ENCODE measurements at regions of chr10 and their contacts with region 1.

Region 1: GRCh38 chr10:79195091-79195923 is 126.5 kb downstream of the ZMIZ1 start:
- DNase-seq: peak; percentile 88
- CTCF ChIP-seq: peak; percentile 96

Region 2: DNA sequence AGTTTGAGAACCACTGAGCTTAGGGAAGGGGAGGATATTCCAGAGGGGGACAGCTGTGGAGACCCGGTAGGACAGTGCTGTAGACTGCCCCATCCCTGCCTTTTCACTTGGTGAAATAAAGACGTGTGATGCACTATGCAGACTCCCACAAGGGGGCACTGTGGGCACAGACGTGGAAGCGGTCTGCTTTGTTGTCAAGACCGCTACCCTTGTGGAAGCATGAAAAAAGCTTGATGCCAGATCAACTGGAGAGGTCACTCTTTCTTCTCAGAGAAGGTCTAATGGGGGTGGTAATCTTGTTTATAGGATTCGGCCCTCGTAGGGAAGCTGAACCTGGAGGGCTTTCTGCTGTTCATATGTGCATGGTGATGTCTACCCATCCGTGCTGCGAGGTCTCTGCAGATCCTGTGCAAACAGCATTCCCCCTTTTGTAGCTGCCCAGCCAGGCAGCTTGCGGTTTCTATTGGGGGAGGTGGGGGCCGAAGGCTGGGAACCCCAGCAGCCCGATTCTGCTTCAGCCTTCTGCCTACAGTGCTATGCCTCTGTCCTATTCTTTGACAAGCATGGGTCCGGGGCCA is 1147.9 kb before region 1 on chr10:
- CTCF ChIA-PET with region 1: interaction called, 102 read pairs
- POLR2A ChIA-PET with region 1: no interaction called
- DNase-seq: peak; percentile 65
- CTCF ChIP-seq: peak; percentile 90

Region 3: GRCh38 chr10:78830062-78830975 is 365.0 kb before region 1 on chr10:
- CTCF ChIA-PET with region 1: no interaction called
- POLR2A ChIA-PET with region 1: no interaction called
- DNase-seq: no peak
- CTCF ChIP-seq: no peak

Region 4: DNA sequence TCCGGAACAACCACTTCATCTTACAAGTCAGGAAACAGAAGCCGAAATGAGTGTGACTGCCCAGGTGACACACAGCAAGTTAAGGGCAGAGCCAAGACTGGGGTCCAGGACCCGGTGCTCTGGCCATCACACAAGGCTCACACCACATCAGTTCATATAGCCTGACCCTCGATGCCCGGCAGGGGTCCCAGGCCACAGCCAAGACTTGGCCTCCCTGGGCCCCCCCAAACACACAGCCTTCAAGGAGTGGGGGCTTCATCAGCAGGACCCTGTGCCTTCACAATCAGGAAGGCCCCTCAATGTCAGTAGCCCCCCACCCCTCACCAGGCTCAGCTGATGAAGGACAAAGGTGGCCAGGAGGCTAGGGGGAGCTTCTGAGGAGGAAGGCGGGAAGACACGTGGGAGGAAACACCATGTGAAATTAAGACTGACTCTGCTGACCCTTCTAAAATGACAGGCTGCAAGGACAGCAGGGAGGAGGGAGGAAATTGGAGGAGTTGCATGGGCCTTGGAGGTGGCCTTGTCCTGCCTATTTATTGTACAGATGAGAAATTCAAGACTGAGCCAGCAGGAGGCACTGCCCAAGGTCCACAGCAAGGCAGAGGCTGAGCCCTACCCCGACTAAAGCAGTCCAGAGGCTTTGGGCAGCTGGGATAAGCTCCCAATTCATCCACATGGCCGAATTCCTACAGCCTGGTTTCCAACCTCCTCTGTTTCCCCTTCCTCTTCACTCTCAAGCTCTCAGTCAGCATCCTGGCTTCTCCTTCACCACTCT is 342.7 kb before region 1 on chr10:
- CTCF ChIA-PET with region 1: interaction called, 15 read pairs
- POLR2A ChIA-PET with region 1: no interaction called
- DNase-seq: no peak
- CTCF ChIP-seq: peak; percentile 13

Region 5: GRCh38 chr10:79067241-79068202 is 127.8 kb before region 1 on chr10:
- CTCF ChIA-PET with region 1: interaction called, 27 read pairs
- POLR2A ChIA-PET with region 1: no interaction called
- DNase-seq: peak; percentile 86
- CTCF ChIP-seq: no peak

Region 6: GRCh38 chr10:79166312-79166721 is 29.0 kb before region 1 on chr10:
- CTCF ChIA-PET with region 1: interaction called, 23 read pairs
- POLR2A ChIA-PET with region 1: no interaction called
- DNase-seq: no peak
- CTCF ChIP-seq: no peak

Region 7: DNA sequence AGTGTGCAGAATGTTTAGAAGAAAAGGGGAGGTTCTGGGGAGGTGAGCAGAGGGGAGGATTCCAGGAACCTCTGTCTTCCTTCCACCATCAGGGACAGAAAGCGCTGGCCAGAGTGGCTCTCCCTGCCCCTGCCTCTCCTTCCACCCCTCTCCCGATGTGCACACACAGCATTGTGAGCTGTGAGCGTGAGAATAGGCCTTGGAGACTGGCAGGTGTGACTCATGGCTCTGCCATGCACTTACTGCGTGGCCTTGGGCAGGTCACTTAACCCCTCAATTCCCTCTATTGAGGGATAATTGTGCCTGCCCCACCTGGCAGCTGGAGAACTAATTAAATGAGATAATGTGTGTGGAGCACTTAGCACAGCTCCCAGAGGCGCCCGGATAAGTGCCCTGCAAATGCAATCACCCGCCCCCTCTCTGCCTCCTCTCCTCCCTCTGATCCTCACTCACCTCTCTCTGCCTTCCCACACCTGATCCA is 11.1 kb before region 1 on chr10:
- CTCF ChIA-PET with region 1: interaction called, 19 read pairs
- POLR2A ChIA-PET with region 1: no interaction called
- DNase-seq: no peak
- CTCF ChIP-seq: no peak

Region 8: DNA sequence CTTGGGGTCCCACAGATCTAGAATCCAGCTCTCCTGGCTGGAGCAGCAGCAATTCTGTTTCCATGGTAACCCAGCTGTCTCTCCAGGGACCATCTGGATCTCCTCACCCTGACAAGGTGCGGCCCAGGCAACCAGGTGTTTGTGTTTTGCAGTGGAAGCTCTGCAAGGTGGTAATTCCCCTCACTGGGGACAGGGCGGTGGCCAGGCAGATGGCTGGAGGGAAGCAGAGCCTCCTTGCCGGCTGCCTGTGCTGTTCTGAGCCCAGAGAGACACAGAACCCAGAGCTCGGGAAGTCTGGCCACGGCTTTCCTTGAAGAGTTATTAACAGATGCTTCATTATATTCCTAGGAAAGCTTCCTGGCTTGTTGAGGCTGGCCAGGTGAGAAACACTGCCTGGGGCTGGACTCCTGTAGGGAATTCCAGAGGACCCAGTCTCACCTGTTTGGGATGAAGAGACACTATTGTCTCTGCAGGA is 33.8 kb after region 1 on chr10:
- CTCF ChIA-PET with region 1: interaction called, 11 read pairs
- POLR2A ChIA-PET with region 1: no interaction called
- DNase-seq: no peak
- CTCF ChIP-seq: no peak

Region 9: GRCh38 chr10:79374312-79375191 is 179.2 kb after region 1 on chr10:
- CTCF ChIA-PET with region 1: no interaction called
- POLR2A ChIA-PET with region 1: no interaction called
- DNase-seq: peak; percentile 85
- CTCF ChIP-seq: peak; percentile 98

Measured in GM10248 (cell line).